ENCODE measurements at regions of chr12 and their contacts with region 1.

Region 1: DNA sequence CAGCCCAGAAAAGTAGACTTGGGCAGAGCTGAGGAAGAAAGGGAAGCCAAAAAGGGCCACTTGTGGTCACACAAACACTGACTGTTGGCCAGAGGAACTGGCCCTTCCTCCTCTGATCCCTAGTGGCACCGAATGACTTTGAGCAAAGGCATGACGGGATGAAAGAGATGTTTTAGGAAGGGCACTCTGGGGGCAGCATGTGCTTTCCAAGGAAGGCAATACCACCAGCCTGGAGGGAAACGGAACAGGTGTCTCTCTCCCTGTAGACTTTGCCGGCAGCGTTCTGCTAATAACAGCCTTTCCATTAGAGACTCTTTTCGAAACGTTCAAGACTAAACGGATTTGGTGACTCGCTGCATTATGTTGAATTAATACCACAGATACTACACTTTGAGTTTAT is 12.3 kb upstream of the FBXO21 start:
- DNase-seq: no peak
- H3K4me3 ChIP-seq: no peak overlapping the region
- H3K27ac ChIP-seq: no peak overlapping the region
- H3K4me1 ChIP-seq: no peaks in the 10 kb centered on the region
- H3K27me3 ChIP-seq: peaks cover 6% of the 10 kb centered on the region
- CTCF ChIP-seq: no peak
- EP300 ChIP-seq: no peak
- POLR2A ChIP-seq: no peak

Region 2: DNA sequence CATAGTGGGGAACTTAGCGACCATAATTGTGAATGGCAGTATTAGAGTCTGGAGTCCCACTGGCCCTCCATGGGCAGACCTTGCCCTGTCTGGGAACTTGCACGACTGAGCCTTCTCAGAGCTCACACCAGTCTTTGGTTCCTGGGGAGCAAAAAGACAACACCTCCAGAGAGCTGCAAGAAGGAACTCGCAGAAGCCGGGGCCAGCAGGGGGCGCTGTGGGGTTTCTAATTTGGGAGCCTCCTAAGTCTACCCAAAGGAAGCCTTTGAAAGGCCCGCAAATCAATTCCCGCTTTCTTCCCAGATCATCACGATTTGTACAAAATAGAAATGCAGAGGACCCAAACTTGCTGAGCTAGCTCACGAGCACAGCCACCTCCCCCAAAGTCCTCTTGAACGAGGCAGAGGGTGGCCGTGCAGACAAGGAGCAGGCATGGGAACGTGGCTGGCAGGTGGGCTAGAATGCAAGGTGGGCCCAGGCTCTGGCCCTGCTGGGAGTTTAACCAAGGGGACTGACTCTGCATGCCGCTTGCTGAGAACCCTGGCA is 34.0 kb after region 1 on chr12:
- in situ Hi-C with region 1: no loop called
- intact Hi-C with region 1: loop called (anchors 1 kb)
- DNase-seq: peak; percentile 78
- H3K4me3 ChIP-seq: no peak overlapping the region
- H3K27ac ChIP-seq: no peak overlapping the region
- H3K4me1 ChIP-seq: no peaks in the 10 kb centered on the region
- H3K27me3 ChIP-seq: peaks cover 15% of the 10 kb centered on the region
- CTCF ChIP-seq: peak; percentile 51 to 76 (median 70)
- EP300 ChIP-seq: no peak
- POLR2A ChIP-seq: no peak

Measured in transverse colon (tissue), 4 donors.